H1 (cell line): ENCODE measurements at regions of chr2 and their contacts with region 1.

Region 1: GRCh38 chr2:197499594-197500526 is at the starts of genes HSPD1 and HSPE1:
- DNase-seq: peak; percentile 95 to 96
- H3K4me3 ChIP-seq: peak within 1 kb of the TSS; percentile 85 to 94 (median 90)
- H3K27ac ChIP-seq: peak within 1 kb of the TSS; percentile 92
- H3K4me1 ChIP-seq: peaks cover 2 to 7% (median 4%) of the 10 kb centered on the region in 4 experiments; a peak in 5 of 7 replicates
- H3K27me3 ChIP-seq: no peaks in the 10 kb centered on the region
- CTCF ChIP-seq: no peak
- EP300 ChIP-seq: peak in 1 of 2 experiments; percentile 37; a peak in 1 of 3 replicates
- POLR2A ChIP-seq: peak; percentile 93 to 96
- RAD21 ChIP-seq: peak in 1 of 2 experiments; percentile 14; a peak in 2 of 4 replicates
- total RNA-seq, gene HSPD1: 1,063 and 1,108 TPM in 2 replicates
- total RNA-seq, gene HSPE1: 364 and 377 TPM in 2 replicates

Region 2: DNA sequence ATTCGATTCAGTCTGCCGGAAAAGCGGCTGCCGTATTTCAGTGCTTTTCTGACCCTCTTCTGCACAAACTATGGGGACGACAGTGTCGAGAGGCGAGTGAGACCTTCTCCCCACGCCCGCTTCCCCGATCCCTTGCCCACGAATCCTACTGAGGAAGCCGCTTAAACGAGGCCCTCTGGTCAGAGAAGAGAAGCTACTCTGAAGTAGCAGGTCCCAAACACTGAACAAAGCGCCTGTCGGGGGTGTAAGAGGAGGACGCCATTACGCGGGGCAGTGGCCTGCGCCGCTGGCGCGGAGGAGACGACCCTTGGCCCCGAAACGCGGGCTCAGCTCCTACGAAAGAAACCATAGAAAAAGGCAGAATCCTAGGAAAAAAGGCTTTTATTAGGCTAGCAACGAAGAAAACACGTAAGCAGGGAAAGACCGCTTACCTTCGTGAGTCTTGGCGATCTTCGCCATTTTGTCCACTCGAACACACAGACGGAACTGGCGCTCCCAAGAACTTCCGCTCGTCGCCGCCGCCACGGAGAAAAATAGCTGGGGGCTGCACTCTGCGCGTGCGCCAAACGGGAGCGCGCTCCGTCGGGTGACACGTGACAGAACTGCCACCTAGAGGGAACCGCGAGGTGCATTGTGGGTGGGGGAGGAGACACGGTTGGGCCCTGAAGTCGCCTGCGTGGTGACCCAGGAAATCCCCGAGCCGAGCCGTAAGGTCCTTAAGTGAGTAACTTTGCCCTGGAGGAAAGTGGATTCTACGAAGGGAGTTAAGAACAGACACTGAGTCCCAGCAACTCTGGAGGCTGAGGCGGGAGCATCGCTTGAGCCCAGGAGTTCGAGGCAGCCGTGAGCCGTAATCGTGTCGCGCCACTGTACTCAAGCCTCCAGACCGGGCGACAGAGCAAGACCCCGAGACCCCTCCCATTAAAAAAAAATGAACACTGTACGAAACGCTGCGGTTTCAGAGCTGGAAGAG is 65.0 kb before region 1 on chr2 and contains the start of gene SF3B1:
- CTCF ChIA-PET with region 1: no interaction called
- POLR2A ChIA-PET with region 1: interaction called, 31 read pairs
- DNase-seq: peak; percentile 91 to 98
- H3K4me3 ChIP-seq: peak within 1 kb of the TSS; percentile 83 to 100 (median 98)
- H3K27ac ChIP-seq: peak within 1 kb of the TSS; percentile 99
- H3K4me1 ChIP-seq: peaks cover 0 to 5% (median 4%) of the 10 kb centered on the region in 4 experiments; a peak in 4 of 7 replicates
- H3K27me3 ChIP-seq: no peaks in the 10 kb centered on the region
- CTCF ChIP-seq: no peak
- EP300 ChIP-seq: no peak
- POLR2A ChIP-seq: peak; percentile 79 to 91
- RAD21 ChIP-seq: no peak
- total RNA-seq, gene SF3B1: 294 and 320 TPM in 2 replicates

Region 3: DNA sequence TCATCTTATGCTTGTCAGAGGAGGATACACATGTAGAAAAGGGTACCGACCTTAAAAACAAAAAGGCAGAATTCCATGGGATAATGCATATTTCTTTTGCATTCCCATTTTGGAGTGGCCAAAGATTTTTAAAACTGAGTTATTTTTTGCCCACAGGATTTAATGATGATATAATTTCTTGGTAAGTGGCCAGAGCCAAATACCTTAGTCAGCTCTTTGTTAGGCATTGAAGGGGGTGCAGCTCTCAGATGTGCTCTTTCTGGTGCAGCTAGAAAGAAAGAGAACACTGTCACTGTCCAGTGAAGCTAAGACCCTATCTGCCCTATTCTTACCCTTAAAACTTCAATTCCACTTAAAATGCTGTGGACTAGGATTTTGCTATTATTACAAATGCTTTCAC is 35.7 kb before region 1 on chr2:
- CTCF ChIA-PET with region 1: no interaction called
- POLR2A ChIA-PET with region 1: interaction called, 15 read pairs
- DNase-seq: no peak
- H3K4me3 ChIP-seq: no peak overlapping the region
- H3K27ac ChIP-seq: no peak overlapping the region
- H3K4me1 ChIP-seq: no peaks in the 10 kb centered on the region
- H3K27me3 ChIP-seq: no peaks in the 10 kb centered on the region
- CTCF ChIP-seq: no peak
- EP300 ChIP-seq: no peak
- POLR2A ChIP-seq: no peak
- RAD21 ChIP-seq: no peak

Region 4: DNA sequence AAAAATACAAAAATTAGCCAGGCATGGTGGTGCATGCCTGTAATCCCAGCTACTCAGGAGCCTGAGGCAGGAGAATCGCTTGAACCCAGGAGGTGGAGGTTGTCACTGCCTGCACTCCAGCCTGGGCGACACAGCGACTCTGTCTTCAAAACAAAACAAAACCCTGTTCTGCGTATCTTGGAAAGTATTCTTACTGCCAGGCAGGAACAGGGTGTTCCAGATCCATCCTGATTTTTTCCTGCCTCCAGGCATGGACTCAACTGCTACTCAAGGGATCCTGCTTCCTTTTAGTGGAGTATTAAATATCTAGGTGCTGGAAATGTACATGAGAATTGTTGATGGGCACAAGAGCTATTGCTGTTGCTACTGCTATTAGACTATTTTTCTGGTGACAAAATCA is 12.5 kb before region 1 on chr2:
- CTCF ChIA-PET with region 1: interaction called, 5 read pairs
- POLR2A ChIA-PET with region 1: interaction called, 270 read pairs
- DNase-seq: no peak
- H3K4me3 ChIP-seq: no peak overlapping the region
- H3K27ac ChIP-seq: no peak overlapping the region
- H3K4me1 ChIP-seq: no peaks in the 10 kb centered on the region
- H3K27me3 ChIP-seq: no peaks in the 10 kb centered on the region
- CTCF ChIP-seq: no peak
- EP300 ChIP-seq: no peak
- POLR2A ChIP-seq: no peak
- RAD21 ChIP-seq: no peak

Region 5: DNA sequence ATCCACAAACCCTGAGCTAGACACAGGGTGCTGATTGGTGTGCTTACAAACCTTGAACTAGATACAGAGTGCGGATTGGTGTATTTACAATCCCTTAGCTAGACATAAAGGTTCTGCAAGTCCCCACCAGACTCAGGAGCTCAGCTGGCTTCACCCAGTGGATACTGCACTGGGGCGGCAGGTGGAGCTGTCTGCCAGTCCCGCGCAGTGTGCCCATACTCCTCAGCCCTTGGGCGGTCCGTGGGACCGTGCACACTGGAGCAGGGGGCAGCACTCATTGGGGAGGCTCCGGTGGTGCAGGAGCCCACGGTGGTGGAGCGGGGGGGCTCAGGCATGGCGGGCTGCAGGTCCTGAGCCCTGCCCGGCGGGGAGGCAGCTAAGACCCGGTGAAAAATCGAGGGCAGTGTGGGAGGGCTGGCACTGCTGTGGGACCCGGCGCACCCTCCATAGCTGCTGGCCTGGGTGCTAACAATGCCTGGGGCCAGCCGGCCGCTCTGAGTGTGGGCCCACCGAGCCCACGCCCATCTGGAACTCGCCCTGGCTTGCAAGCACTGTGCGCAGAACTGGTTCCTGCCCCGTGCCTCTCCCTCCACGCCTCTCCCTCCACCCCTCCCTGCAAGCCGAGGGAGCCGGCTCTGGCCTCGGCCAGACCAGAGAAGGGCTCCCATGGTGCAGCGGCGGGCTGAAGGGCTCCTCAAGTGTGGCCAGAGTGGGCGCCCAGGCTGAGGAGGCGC is 91.6 kb after region 1 on chr2:
- CTCF ChIA-PET with region 1: interaction called, 3 read pairs
- POLR2A ChIA-PET with region 1: interaction called, 13 read pairs
- DNase-seq: no peak
- H3K4me3 ChIP-seq: no peak overlapping the region
- H3K27ac ChIP-seq: no peak overlapping the region
- H3K4me1 ChIP-seq: peaks cover 4 to 12% (median 7%) of the 10 kb centered on the region in 4 experiments
- H3K27me3 ChIP-seq: no peaks in the 10 kb centered on the region
- CTCF ChIP-seq: no peak
- EP300 ChIP-seq: no peak
- POLR2A ChIP-seq: no peak
- RAD21 ChIP-seq: peak in 1 of 2 experiments; percentile 21; a peak in 1 of 4 replicates

Region 6: GRCh38 chr2:197705121-197705911 is 205.5 kb after region 1 on chr2 and contains the start of gene MARS2:
- CTCF ChIA-PET with region 1: interaction called, 3 read pairs
- POLR2A ChIA-PET with region 1: interaction called, 26 read pairs
- DNase-seq: peak; percentile 85 to 91
- H3K4me3 ChIP-seq: peak within 1 kb of the TSS; percentile 85 to 92 (median 90)
- H3K27ac ChIP-seq: 0 out of 2 replicates have a peak within 1 kb of the TSS, but pooled peaks have one; percentile 12
- H3K4me1 ChIP-seq: peaks cover 0 to 7% (median 5%) of the 10 kb centered on the region in 4 experiments; a peak in 4 of 7 replicates
- H3K27me3 ChIP-seq: no peaks in the 10 kb centered on the region; a peak in 1 of 7 replicates
- CTCF ChIP-seq: no peak
- EP300 ChIP-seq: no peak
- POLR2A ChIP-seq: peak; percentile 85 to 89
- RAD21 ChIP-seq: peak in 1 of 2 experiments; percentile 10; a peak in 2 of 4 replicates
- total RNA-seq, gene MARS2: 26.8 and 27.2 TPM in 2 replicates